Mucosa of descending colon (tissue), 3 donors: ENCODE measurements at regions of chr18 and their contacts with region 1.

Region 1: GRCh38 chr18:21739604-21740473 is 753 bp upstream of the MIB1 start:
- DNase-seq: peak; percentile 27 to 56 (median 44)
- ATAC-seq: peak; percentile 2
- H3K4me3 ChIP-seq: no peak overlapping the region
- H3K4me1 ChIP-seq: peaks cover 11% of the 10 kb centered on the region
- CTCF ChIP-seq: no peak

Region 2: DNA sequence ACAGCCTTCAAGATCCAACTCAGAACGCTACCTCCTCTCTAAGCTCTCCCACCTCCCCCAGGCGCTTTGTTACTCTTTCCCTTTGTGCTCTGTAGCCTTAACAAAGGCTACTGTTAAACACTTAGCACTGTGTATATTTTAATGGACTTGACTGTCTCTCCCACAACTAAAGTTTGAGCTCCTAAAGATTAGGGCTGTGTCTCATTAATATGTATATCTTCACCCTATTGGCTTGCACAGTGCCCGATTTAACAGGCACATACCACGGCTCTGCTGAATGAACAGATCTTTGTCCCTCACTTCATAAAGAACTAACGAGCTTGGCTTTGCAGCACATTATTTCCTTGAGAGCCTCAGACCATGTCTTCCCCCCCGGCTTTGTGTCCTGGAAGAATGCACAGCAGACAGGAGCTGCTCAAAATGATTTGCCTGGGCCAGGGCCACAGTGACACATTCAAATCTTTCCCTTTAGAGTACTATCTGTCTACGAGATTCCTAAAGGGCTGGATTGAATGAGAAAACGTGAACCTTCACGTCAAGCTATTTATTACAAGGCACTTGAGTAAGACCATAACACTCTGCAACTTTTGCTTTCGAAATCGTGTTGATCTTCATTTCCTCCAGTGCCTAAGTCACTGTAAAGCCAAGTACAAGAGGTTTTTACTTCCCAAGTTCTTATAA is 57.3 kb before region 1 on chr18:
- intact Hi-C with region 1: loop called in 1 of 2 experiments (anchors 10 kb)
- DNase-seq: peak in 1 of 3 donors; percentile 64
- ATAC-seq: peak; percentile 70
- H3K4me3 ChIP-seq: no peak overlapping the region
- H3K4me1 ChIP-seq: peaks cover 41% of the 10 kb centered on the region
- CTCF ChIP-seq: no peak